Activated B cell treated with CpG ODN at 0.5 μM for 24 hours (primary cell): ENCODE measurements at regions of chr17 and their contacts with region 1.

Region 1: DNA sequence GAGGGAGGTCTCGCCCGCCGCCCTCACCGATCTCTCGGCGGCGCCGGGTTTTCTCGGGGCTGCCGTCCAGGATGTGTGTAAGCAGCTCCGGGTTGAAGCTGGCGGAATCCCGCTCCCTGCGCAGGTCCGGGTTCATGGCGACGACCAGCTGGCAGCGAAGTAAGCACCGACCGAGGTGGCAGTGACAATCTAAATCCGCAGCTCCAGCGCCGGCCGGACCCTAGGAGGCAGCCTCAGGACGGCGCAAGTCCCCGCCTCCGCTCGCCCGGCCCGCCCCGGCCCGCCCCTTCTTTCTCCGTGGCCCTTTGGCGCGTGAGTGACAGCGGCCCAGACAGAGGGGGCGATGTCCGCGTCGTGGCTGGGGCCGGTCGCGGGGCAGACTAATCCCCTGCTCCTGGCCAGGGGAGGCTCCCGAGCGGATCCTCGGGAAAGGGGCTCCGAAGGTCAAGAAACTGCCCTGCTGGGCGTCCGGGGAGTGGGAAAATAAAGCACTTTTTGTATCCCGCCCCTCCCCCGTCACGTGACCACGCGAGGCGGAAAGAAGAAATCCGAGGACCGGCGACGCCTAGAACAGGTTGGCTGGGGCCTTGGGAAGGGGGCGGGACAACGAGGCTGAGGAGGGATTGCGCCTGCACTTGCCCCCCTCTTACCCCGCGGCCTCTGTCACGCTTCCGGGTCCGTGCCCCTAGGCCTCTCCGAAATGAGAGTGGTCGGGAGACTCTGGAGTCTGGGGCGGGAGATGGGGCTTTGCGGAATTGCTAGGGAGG is at the starts of genes ACOX1 and TEN1:
- DNase-seq: peak; percentile 91
- ATAC-seq: peak; percentile 94
- H3K4me3 Mint-ChIP-seq: peak within 1 kb of the TSS; percentile 100
- H3K27ac Mint-ChIP-seq: peak within 1 kb of the TSS; percentile 100
- H3K4me1 Mint-ChIP-seq: peaks cover 37% of the 10 kb centered on the region
- H3K27me3 Mint-ChIP-seq: no peaks in the 10 kb centered on the region
- CTCF ChIP-seq: no peak
- total RNA-seq, gene ACOX1: 23.3 and 25.8 TPM in 2 replicates
- total RNA-seq, gene TEN1: 22.7 and 23.2 TPM in 2 replicates

Region 2: DNA sequence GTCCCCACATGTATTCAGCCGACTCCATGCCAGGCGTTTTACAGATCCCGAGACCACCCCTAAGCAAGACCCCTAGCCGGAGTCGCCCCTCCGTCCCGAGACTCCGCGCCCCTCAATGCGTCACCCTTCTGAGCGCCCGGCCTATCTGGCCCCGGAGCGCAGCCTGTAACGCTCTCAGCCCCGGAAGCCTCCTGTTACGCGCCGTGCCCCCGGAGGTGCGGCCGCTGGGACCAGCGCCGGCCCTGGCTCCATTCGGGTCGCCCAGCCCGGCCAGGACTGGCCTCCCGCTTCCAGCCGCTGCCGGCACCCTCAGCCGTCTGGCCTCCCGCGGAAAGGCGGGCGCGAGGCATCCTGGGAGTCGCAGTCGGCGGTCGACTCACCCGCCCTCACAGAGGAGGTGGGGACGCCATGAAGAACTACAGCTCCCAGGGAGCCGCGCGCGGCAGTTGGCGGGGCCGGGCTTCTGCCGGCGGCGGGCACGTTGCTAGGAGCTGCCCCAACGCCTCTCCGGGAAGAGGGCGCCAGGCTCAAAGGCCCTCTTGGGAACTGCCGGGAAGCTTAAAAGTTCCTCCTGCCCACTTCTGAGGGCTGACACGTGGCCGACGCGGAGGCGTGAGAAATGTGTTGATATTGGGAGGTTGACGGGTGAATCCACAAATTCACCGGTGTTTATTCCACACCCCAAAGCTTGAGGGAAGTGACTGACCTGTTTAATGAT is 38.2 kb before region 1 on chr17 and contains the start of gene FBF1:
- CTCF ChIA-PET with region 1: no interaction called
- POLR2A ChIA-PET with region 1: interaction called, 6 read pairs
- intact Hi-C with region 1: loop called (anchors 1 kb)
- DNase-seq: peak; percentile 83
- ATAC-seq: peak; percentile 100
- H3K4me3 Mint-ChIP-seq: peak within 1 kb of the TSS; percentile 86
- H3K27ac Mint-ChIP-seq: peak within 1 kb of the TSS; percentile 61
- H3K4me1 Mint-ChIP-seq: peaks cover 13% of the 10 kb centered on the region
- H3K27me3 Mint-ChIP-seq: no peaks in the 10 kb centered on the region
- CTCF ChIP-seq: no peak
- total RNA-seq, gene FBF1: 13.2 and 15.1 TPM in 2 replicates

Region 3: DNA sequence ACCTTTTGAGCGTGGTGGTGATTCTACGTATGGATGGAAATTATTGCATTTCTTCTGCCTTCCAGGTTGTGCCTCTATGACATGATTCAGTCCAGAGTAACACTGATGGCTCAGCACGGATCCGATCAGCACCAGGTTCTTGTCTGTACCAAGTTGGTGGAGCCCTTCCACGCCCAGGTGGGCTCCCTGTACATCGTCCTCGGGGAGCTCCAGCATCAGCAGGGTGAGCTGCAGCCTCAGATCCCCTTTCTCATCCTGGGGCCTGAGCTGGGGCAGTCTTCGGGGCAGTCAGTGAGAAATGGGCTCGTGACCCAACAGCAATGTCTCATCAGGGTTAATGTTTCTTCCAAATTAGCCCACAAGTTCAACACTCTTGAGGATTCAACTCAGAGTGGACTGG is 12.3 kb after region 1 on chr17:
- CTCF ChIA-PET with region 1: interaction called, 3 read pairs
- POLR2A ChIA-PET with region 1: interaction called, 15 read pairs
- intact Hi-C with region 1: loop called (anchors 1 kb)
- DNase-seq: no peak
- ATAC-seq: no peak
- H3K4me3 Mint-ChIP-seq: no peak overlapping the region
- H3K27ac Mint-ChIP-seq: no peak overlapping the region
- H3K4me1 Mint-ChIP-seq: peaks cover 14% of the 10 kb centered on the region
- H3K27me3 Mint-ChIP-seq: no peaks in the 10 kb centered on the region
- CTCF ChIP-seq: no peak

Region 4: DNA sequence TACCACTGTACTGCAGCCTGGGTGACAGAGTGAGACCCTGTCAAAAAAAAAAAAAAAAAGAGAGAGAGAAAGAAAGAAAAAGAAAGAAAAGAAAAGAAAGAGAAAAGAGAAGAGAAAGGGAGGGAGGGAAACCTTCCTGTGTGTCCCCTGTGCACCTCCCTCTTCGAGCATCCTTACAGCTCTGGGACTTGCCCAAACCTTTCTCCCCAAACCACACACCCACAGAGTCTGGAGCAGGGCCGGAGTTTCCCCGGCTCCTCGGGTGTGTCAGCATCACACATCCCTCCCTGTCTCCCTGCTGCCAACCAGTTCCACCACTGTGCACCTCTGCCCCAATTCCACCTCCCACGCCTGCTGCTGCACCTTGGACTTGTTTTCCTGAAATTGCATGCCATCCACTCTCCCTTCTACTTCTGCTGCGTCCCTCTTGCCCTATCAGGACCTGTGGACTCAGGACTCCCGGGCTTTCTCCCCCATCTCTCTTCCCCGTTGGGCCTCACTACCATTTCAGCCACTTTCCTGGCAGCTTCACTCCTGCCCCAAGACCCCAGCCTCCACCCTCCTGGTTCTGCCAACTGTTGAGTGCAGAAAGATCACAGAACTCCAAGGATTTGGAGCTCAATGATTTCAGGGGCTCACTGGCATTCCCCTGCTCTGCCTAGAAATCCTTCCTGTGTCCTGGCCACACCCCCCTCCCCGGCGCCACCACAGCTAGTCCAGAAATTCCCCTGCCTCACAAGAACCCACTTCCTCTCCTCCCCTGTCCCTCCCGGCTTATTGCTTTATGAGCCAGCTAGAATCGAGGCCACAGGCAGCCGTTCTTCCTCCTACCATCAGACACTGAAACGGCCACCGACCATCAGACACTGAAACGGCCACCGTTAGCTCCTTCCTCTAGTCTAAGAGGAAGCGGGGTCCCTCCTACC is 17.8 kb after region 1 on chr17:
- CTCF ChIA-PET with region 1: interaction called, 3 read pairs
- POLR2A ChIA-PET with region 1: interaction called, 15 read pairs
- intact Hi-C with region 1: loop called (anchors 1 kb)
- DNase-seq: no peak
- ATAC-seq: peak; percentile 49
- H3K4me3 Mint-ChIP-seq: peak overlapping the region; percentile 52
- H3K27ac Mint-ChIP-seq: peak overlapping the region; percentile 64
- H3K4me1 Mint-ChIP-seq: peaks cover 19% of the 10 kb centered on the region
- H3K27me3 Mint-ChIP-seq: no peaks in the 10 kb centered on the region
- CTCF ChIP-seq: no peak

Region 5: DNA sequence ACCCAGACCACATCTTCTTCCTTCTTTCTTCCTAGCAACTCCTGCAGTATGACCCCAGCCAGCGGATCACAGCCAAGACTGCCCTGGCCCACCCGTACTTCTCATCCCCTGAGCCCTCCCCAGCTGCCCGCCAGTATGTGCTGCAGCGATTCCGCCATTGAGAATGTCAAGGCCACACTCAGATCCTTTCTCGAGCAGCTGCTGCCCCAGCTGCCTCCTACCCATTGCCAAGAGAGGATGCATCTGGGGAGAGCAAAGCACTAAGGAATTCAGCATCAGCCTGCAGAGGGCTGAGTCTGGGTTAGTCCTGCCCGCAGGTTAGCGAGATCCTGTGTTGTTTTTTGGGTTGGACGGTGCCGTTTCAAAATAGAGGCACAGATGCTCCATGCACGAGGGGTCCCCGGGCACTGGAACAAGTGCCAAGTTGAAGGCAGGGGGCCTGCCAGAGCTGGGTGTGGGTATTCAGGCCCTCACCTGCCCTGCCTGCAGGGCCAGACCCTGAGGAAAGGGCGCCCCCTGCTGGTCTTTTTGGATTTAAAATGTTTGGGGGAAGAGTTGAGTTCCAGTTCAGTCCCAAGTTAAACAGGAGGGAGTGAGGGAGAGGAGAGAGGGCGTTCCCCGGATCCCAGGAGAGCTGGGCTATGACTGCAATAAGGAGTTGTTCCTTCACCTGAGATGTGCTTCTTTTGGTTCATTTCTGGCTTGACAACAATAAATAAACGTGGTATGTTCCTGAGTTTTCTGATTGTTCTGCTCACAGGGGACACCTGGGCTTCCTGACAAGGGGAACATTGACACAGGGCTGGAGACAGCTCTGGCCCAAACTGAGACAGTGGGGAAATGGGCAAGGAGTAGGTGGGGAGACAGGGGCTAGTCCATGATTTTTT is 26.4 kb after region 1 on chr17:
- CTCF ChIA-PET with region 1: no interaction called
- POLR2A ChIA-PET with region 1: interaction called, 4 read pairs
- intact Hi-C with region 1: loop called (anchors 1 kb)
- DNase-seq: peak; percentile 73
- ATAC-seq: peak; percentile 85
- H3K4me3 Mint-ChIP-seq: no peak overlapping the region
- H3K27ac Mint-ChIP-seq: peak overlapping the region; percentile 24
- H3K4me1 Mint-ChIP-seq: no peaks in the 10 kb centered on the region
- H3K27me3 Mint-ChIP-seq: no peaks in the 10 kb centered on the region
- CTCF ChIP-seq: no peak